MCF 10A (cell line): ENCODE measurements at regions of chr2 and their contacts with region 1.

Region 1: DNA sequence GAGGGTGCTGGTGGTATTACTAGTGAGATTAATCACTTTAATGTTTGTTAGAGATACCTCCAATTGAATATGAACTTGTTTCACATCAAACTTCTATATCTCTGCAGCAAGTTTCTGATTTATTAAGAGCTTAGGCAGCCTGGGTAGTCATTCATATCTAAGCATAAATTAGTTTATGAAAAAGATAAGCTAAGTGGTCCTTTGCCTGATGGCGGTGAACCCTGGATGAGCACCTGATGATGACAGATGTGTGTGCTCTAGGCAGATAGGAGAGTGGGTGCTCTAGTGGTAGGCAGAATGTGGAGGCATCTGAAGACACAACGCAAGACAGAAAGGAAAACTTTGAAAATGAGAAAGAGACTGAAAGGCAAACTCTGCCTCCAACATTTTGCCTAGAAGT is 5.0 kb downstream of the FKBP7 start:
- DNase-seq: no peak
- H3K4me3 Mint-ChIP-seq: no peak overlapping the region
- H3K27ac Mint-ChIP-seq: no peak overlapping the region
- H3K4me1 Mint-ChIP-seq: peaks cover 4% of the 10 kb centered on the region
- H3K27me3 Mint-ChIP-seq: no peaks in the 10 kb centered on the region
- CTCF ChIP-seq: no peak

Region 2: DNA sequence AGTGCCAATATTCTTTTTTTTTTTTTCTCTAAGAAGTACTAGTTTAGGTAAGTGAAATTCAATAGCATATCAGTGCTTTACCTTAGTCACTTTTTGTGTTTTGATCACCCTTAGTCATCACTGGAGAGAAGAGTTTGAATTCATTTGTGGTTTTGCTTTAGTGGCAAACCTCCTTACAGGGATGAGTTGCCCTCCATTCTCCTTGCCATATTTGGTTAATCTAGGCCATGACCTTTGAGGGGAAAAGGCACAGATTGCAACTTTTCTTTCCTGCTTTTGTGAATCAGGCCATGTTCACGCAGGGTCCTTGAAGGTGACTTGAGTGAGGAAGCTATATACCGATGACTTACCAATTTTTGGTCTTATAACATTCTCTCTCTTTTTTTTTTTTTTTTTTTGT is 41.3 kb after region 1 on chr2:
- CTCF ChIA-PET with region 1: interaction called, 10 read pairs
- POLR2A ChIA-PET with region 1: no interaction called
- intact Hi-C with region 1: no loop called
- DNase-seq: peak; percentile 66
- H3K4me3 Mint-ChIP-seq: no peak overlapping the region
- H3K27ac Mint-ChIP-seq: no peak overlapping the region
- H3K4me1 Mint-ChIP-seq: no peaks in the 10 kb centered on the region
- H3K27me3 Mint-ChIP-seq: no peaks in the 10 kb centered on the region
- CTCF ChIP-seq: no peak

Region 3: DNA sequence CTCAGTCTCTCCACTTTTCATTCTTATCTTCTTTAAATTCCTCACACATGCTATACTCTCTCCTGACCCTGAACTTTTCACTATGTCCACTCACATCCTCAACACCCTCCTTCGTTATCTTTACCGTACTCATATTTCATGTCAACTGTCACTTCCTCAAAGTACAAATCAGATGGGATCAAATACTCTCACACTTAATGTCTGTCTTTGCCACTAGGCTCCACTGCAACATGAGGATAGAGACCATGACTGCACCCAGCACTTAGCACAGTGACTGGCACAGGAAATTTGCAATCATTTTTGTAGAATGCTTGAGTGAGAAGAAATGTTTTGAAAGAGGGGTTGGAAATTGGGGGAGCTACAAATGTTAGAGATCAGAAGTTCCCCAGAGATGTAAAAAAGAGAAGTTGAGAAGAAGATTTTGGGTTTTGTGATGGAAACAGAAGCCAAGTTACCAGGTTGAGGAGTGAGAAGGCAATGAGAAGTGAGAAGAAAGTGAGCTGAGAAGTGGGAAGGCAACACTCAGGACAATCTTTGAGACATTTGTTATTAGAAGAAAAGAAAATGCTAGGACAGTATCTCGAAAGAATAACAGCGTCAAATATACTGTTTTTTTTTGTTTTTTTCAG is 489.5 kb after region 1 on chr2:
- CTCF ChIA-PET with region 1: no interaction called
- POLR2A ChIA-PET with region 1: no interaction called
- intact Hi-C with region 1: no loop called
- DNase-seq: no peak
- H3K4me3 Mint-ChIP-seq: no peak overlapping the region
- H3K27ac Mint-ChIP-seq: no peak overlapping the region
- H3K4me1 Mint-ChIP-seq: no peaks in the 10 kb centered on the region
- H3K27me3 Mint-ChIP-seq: no peaks in the 10 kb centered on the region
- CTCF ChIP-seq: no peak